Activated CD8-positive, alpha-beta T cell treated with anti-CD3 and anti-CD28 coated beads, Interleukin-2, amount 10 ng/mL, durations not matched to agents 7 days and 5 days (primary cell): ENCODE measurements at regions of chr14 and their contacts with region 1.

Region 1: GRCh38 chr14:64891839-64892375 is 12.2 kb upstream of the SPTB start:
- DNase-seq: peak; percentile 66
- ATAC-seq: peak; percentile 81
- H3K4me3 Mint-ChIP-seq: no peak overlapping the region
- H3K27ac Mint-ChIP-seq: no peak overlapping the region
- H3K4me1 Mint-ChIP-seq: no peaks in the 10 kb centered on the region
- H3K27me3 Mint-ChIP-seq: peaks cover 20% of the 10 kb centered on the region

Region 2: DNA sequence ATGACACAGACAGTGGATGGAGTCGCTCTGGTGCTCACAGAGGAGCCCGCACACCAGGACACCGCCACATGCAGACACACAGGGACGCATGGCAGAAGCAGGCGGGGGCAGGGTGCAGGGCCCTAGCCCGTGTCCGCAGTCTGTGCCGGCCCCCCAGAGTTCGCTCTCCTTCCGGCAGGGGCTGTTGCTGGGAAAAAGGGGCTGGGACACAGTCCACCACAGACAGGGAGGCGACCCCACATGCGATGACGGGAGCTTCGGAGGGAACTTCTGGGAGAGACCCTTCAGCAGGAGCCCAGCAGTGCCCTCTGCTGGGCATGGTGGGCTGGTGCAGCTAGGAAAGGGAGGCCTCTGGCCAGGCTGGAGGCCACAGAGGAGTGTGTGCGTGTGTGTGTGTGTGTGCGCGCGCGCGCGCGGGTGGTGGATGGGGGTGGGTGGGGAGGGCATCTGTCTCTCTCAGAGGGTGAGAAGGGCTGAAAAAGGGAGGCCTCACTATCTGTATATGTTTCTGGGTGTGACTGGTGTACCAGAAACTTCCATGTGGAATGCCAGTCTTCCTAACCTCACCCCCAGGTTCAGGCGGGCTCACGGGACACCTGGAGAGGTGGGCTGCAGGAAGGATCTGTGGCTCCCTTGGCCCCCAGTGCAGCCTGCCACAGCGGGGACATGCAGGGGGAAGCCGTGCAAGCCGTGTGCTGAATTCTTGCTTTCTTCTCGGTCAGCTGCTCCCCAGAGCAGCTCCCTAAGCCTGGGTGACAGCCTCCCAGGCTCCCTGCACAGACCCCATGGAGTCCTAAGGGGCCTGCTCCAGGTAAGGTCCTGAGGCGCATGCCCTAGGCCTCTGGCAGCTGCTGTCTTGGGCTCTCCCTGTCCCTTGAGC is 127.0 kb before region 1 on chr14:
- CTCF ChIA-PET with region 1: interaction called, 24 read pairs
- POLR2A ChIA-PET with region 1: no interaction called
- DNase-seq: peak; percentile 74
- ATAC-seq: peak; percentile 79
- H3K4me3 Mint-ChIP-seq: peak overlapping the region; percentile 10
- H3K27ac Mint-ChIP-seq: no peak overlapping the region
- H3K4me1 Mint-ChIP-seq: peaks cover 18% of the 10 kb centered on the region
- H3K27me3 Mint-ChIP-seq: peaks cover 22% of the 10 kb centered on the region

Region 3: GRCh38 chr14:64815257-64815656 is 76.7 kb before region 1 on chr14:
- CTCF ChIA-PET with region 1: interaction called, 12 read pairs
- POLR2A ChIA-PET with region 1: no interaction called
- DNase-seq: no peak
- ATAC-seq: no peak
- H3K4me3 Mint-ChIP-seq: no peak overlapping the region
- H3K27ac Mint-ChIP-seq: no peak overlapping the region
- H3K4me1 Mint-ChIP-seq: no peaks in the 10 kb centered on the region
- H3K27me3 Mint-ChIP-seq: peaks cover 39% of the 10 kb centered on the region

Region 4: DNA sequence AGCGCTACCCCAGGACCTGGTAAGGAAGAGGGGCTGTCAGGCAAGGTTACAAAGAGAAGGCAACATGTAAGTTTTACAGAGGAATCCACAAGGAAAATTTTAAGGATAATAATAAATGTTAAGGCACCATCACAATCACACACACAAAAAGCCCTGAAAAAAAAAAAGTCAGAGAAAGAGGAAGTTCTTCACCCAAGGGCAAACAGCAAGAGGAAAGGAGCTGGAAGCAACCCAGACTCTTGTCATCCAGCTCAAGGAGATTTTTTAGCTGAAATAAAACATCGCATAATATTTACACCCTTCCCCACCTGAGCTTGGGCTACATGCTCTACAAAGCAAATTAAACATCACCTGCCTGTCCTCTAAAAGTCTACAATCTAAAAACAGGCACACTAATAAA is 21.7 kb before region 1 on chr14:
- CTCF ChIA-PET with region 1: interaction called, 13 read pairs
- POLR2A ChIA-PET with region 1: interaction called, 3 read pairs
- DNase-seq: no peak
- ATAC-seq: no peak
- H3K4me3 Mint-ChIP-seq: no peak overlapping the region
- H3K27ac Mint-ChIP-seq: no peak overlapping the region
- H3K4me1 Mint-ChIP-seq: no peaks in the 10 kb centered on the region
- H3K27me3 Mint-ChIP-seq: peaks cover 40% of the 10 kb centered on the region

Region 5: DNA sequence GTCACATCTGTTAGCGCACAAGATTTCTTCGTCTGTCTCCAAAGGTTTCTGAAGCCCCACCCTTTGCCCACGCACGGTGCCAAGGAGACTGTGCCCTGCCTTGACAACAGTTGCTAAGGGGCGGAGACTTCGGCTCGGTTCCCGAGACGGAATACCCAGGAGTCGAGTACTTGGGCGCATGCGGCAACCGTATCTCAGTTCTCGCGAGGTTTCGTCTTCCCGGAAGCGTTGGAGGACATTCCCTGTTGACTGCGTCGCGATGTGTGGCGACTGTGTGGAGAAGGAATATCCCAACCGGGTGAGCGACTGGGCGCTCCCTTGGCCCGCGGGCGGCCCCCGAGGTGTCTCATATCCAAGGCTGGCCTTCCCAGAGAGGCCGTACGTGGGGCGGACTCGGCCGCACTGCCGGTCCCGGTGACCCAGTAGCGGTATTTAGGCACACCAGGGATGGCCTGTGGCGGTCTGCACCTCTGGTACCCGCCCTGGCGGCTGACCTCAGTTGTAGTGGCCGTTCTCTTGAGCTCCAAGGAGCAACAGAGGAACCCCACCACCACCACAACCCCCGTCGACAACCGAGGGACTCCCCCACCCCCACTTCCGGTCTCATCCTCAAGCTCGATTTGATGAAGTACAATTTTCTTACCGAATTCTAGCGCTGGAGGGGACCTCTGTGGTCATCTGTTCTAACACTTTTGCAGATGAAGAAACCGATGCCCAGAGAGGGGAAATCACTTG is 22.5 kb after region 1 on chr14 and contains the start of gene CHURC1:
- CTCF ChIA-PET with region 1: interaction called, 18 read pairs
- POLR2A ChIA-PET with region 1: no interaction called
- DNase-seq: peak; percentile 97
- ATAC-seq: peak; percentile 98
- H3K4me3 Mint-ChIP-seq: peak within 1 kb of the TSS; percentile 87
- H3K27ac Mint-ChIP-seq: peak within 1 kb of the TSS; percentile 93
- H3K4me1 Mint-ChIP-seq: peaks cover 41% of the 10 kb centered on the region
- H3K27me3 Mint-ChIP-seq: peaks cover 7% of the 10 kb centered on the region
- total RNA-seq, gene CHURC1: 62.4 to 72.2 TPM

Region 6: GRCh38 chr14:64986578-64987571 is 95.0 kb after region 1 on chr14 and contains the start of gene FNTB:
- CTCF ChIA-PET with region 1: interaction called, 12 read pairs
- POLR2A ChIA-PET with region 1: no interaction called
- DNase-seq: peak; percentile 96
- ATAC-seq: peak; percentile 98
- H3K4me3 Mint-ChIP-seq: peak within 1 kb of the TSS; percentile 97
- H3K27ac Mint-ChIP-seq: peak within 1 kb of the TSS; percentile 96
- H3K4me1 Mint-ChIP-seq: peaks cover 52% of the 10 kb centered on the region
- H3K27me3 Mint-ChIP-seq: peaks cover 19% of the 10 kb centered on the region
- total RNA-seq, gene FNTB: 17.9 to 18.8 TPM